ENCODE measurements at regions of chr22 and their contacts with region 1.

Region 1: GRCh38 chr22:42444077-42444904 is 12.1 kb upstream of the NFAM1 start:
- DNase-seq: peak; percentile 61 to 88 (median 82)
- ATAC-seq: peak; percentile 92
- H3K4me3 ChIP-seq: peak overlapping the region; percentile 68
- H3K4me3 Mint-ChIP-seq: peak overlapping the region; percentile 77 to 94 (median 84)
- H3K27ac ChIP-seq: peak overlapping the region; percentile 71
- H3K27ac Mint-ChIP-seq: peak overlapping the region; percentile 88 to 98 (median 94)
- H3K4me1 ChIP-seq: peaks cover 15% of the 10 kb centered on the region in 2 donors
- H3K4me1 Mint-ChIP-seq: peaks cover 9 to 34% (median 26%) of the 10 kb centered on the region in 7 donors
- H3K27me3 ChIP-seq: no peaks in the 10 kb centered on the region
- H3K27me3 Mint-ChIP-seq: peaks cover 0 to 3% (median 0%) of the 10 kb centered on the region in 5 donors

Region 2: DNA sequence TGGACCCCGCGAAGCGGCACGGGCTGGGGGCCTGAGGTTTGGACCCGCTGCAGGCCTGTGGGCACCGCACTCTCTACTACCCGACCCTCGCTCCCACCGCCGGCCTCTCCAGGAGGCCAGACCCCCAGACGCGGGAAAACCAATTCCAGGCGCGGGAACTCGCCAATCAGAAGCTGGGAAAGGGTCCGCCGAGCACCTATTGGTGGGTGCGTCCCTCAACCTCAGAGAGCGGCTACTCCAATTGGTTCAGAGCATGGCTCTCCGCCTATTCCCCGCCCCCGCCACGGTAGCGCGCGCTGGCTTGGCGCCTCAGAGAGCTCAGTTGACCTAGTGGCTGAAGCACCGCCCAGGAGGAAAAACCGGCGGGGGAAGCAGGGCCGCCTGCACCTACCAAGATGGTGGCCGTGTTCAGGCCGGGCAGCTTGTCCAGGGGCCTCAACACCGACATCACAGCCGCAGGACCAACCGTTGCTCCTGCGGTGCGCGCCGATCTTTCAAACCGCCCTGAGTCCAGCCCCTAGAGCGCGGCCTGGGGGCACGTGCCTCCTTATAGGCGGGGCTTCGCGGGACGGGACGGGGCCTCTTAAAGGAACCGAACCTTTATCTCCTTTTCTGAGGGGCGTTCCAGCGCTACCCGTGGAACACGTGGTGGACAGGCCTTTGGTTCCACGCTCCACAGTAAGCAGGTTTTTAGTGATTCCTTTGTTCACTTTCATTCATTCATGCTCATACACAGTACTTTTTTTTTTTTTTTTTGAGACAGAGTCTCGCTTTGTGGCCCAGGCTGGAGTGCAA is 497.5 kb before region 1 on chr22 and contains the start of gene CENPM:
- CTCF ChIA-PET with region 1: no interaction called
- POLR2A ChIA-PET with region 1: interaction called, 3 read pairs
- intact Hi-C with region 1: loop called in 1 of 2 experiments (anchors 5 kb)
- DNase-seq: peak; percentile 71 to 94 (median 84)
- ATAC-seq: peak; percentile 97
- H3K4me3 ChIP-seq: peak within 1 kb of the TSS; percentile 82
- H3K4me3 Mint-ChIP-seq: peak within 1 kb of the TSS; percentile 83 to 93 (median 91)
- H3K27ac ChIP-seq: peak within 1 kb of the TSS; percentile 37
- H3K27ac Mint-ChIP-seq: peak within 1 kb of the TSS in 7 of 9 donors; percentile 63 to 93 (median 68)
- H3K4me1 ChIP-seq: peaks cover 3 to 13% of the 10 kb centered on the region in 2 donors
- H3K4me1 Mint-ChIP-seq: peaks cover 0 to 41% (median 10%) of the 10 kb centered on the region in 7 donors
- H3K27me3 ChIP-seq: no peaks in the 10 kb centered on the region
- H3K27me3 Mint-ChIP-seq: no peaks in the 10 kb centered on the region
- total RNA-seq, gene CENPM: 5.1 to 51.1 (median 10.8) TPM

Region 3: GRCh38 chr22:42079319-42080251 is 364.7 kb before region 1 on chr22 and contains the start of gene SMDT1:
- CTCF ChIA-PET with region 1: interaction called, 6 read pairs
- POLR2A ChIA-PET with region 1: interaction called, 26 read pairs
- intact Hi-C with region 1: no loop called
- DNase-seq: peak; percentile 96 to 100 (median 99)
- ATAC-seq: peak; percentile 94
- H3K4me3 ChIP-seq: peak within 1 kb of the TSS; percentile 98
- H3K4me3 Mint-ChIP-seq: peak within 1 kb of the TSS; percentile 94 to 99 (median 96)
- H3K27ac ChIP-seq: peak within 1 kb of the TSS; percentile 97
- H3K27ac Mint-ChIP-seq: peak within 1 kb of the TSS; percentile 96 to 99 (median 99)
- H3K4me1 ChIP-seq: peaks cover 10 to 16% of the 10 kb centered on the region in 2 donors
- H3K4me1 Mint-ChIP-seq: peaks cover 9 to 52% (median 43%) of the 10 kb centered on the region in 7 donors
- H3K27me3 ChIP-seq: no peaks in the 10 kb centered on the region
- H3K27me3 Mint-ChIP-seq: no peaks in the 10 kb centered on the region
- total RNA-seq, gene SMDT1: 40.4 to 105 (median 98.8) TPM

Region 4: GRCh38 chr22:42180349-42180842 is 263.9 kb before region 1 on chr22:
- CTCF ChIA-PET with region 1: interaction called, 5 read pairs
- POLR2A ChIA-PET with region 1: no interaction called
- intact Hi-C with region 1: loop called in 1 of 2 experiments (anchors 5 kb)
- DNase-seq: peak in 7 of 9 donors; percentile 59 to 78 (median 71)
- ATAC-seq: peak; percentile 97
- H3K4me3 ChIP-seq: no peak overlapping the region
- H3K4me3 Mint-ChIP-seq: peak overlapping the region; percentile 19 to 73 (median 57)
- H3K27ac ChIP-seq: peak overlapping the region; percentile 52
- H3K27ac Mint-ChIP-seq: peak overlapping the region; percentile 55 to 90 (median 79)
- H3K4me1 ChIP-seq: peaks cover 25 to 38% of the 10 kb centered on the region in 2 donors
- H3K4me1 Mint-ChIP-seq: peaks cover 50 to 86% (median 75%) of the 10 kb centered on the region in 7 donors
- H3K27me3 ChIP-seq: no peaks in the 10 kb centered on the region
- H3K27me3 Mint-ChIP-seq: no peaks in the 10 kb centered on the region

Region 5: GRCh38 chr22:42369245-42370041 is 74.8 kb before region 1 on chr22:
- CTCF ChIA-PET with region 1: interaction called, 4 read pairs
- POLR2A ChIA-PET with region 1: no interaction called
- intact Hi-C with region 1: loop called in 1 of 2 experiments (anchors 5 kb)
- DNase-seq: peak; percentile 67 to 84 (median 79)
- ATAC-seq: peak; percentile 99
- H3K4me3 ChIP-seq: peak overlapping the region; percentile 66
- H3K4me3 Mint-ChIP-seq: peak overlapping the region; percentile 87 to 99 (median 93)
- H3K27ac ChIP-seq: peak overlapping the region; percentile 30
- H3K27ac Mint-ChIP-seq: peak overlapping the region; percentile 2 to 88 (median 77)
- H3K4me1 ChIP-seq: peaks cover 4 to 11% of the 10 kb centered on the region in 2 donors
- H3K4me1 Mint-ChIP-seq: peaks cover 9 to 19% (median 14%) of the 10 kb centered on the region in 7 donors
- H3K27me3 ChIP-seq: peaks cover 0 to 18% of the 10 kb centered on the region in 2 donors
- H3K27me3 Mint-ChIP-seq: peaks cover 19 to 49% (median 25%) of the 10 kb centered on the region in 5 donors